GM13976 (cell line): ENCODE measurements at regions of chr12 and their contacts with region 1.

Region 1: GRCh38 chr12:96061864-96062453 is 26.6 kb upstream of the LTA4H start:
- DNase-seq: peak; percentile 79
- CTCF ChIP-seq: peak; percentile 75

Region 2: GRCh38 chr12:95908573-95908972 is 153.4 kb before region 1 on chr12:
- in situ Hi-C with region 1: no loop called
- DNase-seq: no peak
- CTCF ChIP-seq: no peak

Region 3: GRCh38 chr12:96211988-96212387 is 150.0 kb after region 1 on chr12:
- in situ Hi-C with region 1: loop called (anchors 5 kb)
- DNase-seq: no peak
- CTCF ChIP-seq: no peak